Activated CD4-positive, alpha-beta T cell treated with anti-CD3 and anti-CD28 coated beads for 36 hours (primary cell): ENCODE measurements at regions of chr1 and their contacts with region 1.

Region 1: GRCh38 chr1:229558571-229559335 is at the start of gene ABCB10:
- DNase-seq: peak; percentile 94
- ATAC-seq: peak; percentile 83
- H3K4me3 Mint-ChIP-seq: peak within 1 kb of the TSS; percentile 86
- H3K27ac Mint-ChIP-seq: peak within 1 kb of the TSS; percentile 89
- H3K4me1 Mint-ChIP-seq: peaks cover 34% of the 10 kb centered on the region
- H3K27me3 Mint-ChIP-seq: no peaks in the 10 kb centered on the region
- total RNA-seq, gene ABCB10: 18.4 to 30.1 TPM

Region 2: GRCh38 chr1:228944935-228945371 is 613.8 kb before region 1 on chr1:
- CTCF ChIA-PET with region 1: no interaction called
- POLR2A ChIA-PET with region 1: no interaction called
- intact Hi-C with region 1: no loop called
- DNase-seq: peak; percentile 12
- ATAC-seq: peak; percentile 58
- H3K4me3 Mint-ChIP-seq: no peak overlapping the region
- H3K27ac Mint-ChIP-seq: no peak overlapping the region
- H3K4me1 Mint-ChIP-seq: peaks cover 2% of the 10 kb centered on the region
- H3K27me3 Mint-ChIP-seq: no peaks in the 10 kb centered on the region

Region 3: GRCh38 chr1:229270547-229271447 is 288.0 kb before region 1 on chr1 and contains the start of gene RAB4A:
- CTCF ChIA-PET with region 1: interaction called, 3 read pairs
- POLR2A ChIA-PET with region 1: no interaction called
- intact Hi-C with region 1: loop called in 1 of 2 experiments (anchors 2 kb)
- DNase-seq: peak; percentile 84
- ATAC-seq: peak; percentile 87
- H3K4me3 Mint-ChIP-seq: peak within 1 kb of the TSS; percentile 82
- H3K27ac Mint-ChIP-seq: peak within 1 kb of the TSS; percentile 71
- H3K4me1 Mint-ChIP-seq: peaks cover 31% of the 10 kb centered on the region
- H3K27me3 Mint-ChIP-seq: no peaks in the 10 kb centered on the region
- total RNA-seq, gene RAB4A: 22.1 to 24.0 TPM

Region 4: GRCh38 chr1:229507951-229508822 is 50.6 kb before region 1 on chr1 and contains the start of gene NUP133:
- CTCF ChIA-PET with region 1: interaction called, 3 read pairs
- POLR2A ChIA-PET with region 1: interaction called, 7 read pairs
- intact Hi-C with region 1: loop called (anchors 1 to 2 kb)
- DNase-seq: peak; percentile 100
- ATAC-seq: peak; percentile 95
- H3K4me3 Mint-ChIP-seq: peak within 1 kb of the TSS; percentile 95
- H3K27ac Mint-ChIP-seq: peak within 1 kb of the TSS; percentile 92
- H3K4me1 Mint-ChIP-seq: peaks cover 24% of the 10 kb centered on the region
- H3K27me3 Mint-ChIP-seq: no peaks in the 10 kb centered on the region
- total RNA-seq, gene NUP133: 53.5 to 57.5 TPM

Region 5: DNA sequence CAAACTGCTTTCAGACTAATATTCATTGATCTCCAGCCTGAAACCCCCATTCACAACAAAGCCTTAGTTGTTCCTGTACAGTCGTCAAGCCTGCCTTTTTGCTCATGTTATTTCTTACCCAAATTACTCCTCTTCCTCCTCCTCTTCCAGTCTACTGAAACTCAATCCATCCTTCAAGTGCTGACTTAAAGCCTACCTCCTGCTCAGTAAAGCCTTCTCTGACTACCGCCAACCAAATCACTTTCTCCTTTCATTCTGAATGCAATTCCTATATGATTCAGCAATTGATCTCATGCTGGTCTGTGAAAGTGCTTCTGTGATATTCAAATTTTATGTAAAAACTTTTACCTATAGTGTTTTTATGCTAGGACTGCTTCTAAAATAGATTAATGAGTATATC is 48.6 kb after region 1 on chr1:
- CTCF ChIA-PET with region 1: no interaction called
- POLR2A ChIA-PET with region 1: no interaction called
- intact Hi-C with region 1: loop called in 1 of 2 experiments (anchors 5 kb)
- DNase-seq: no peak
- ATAC-seq: peak; percentile 83
- H3K4me3 Mint-ChIP-seq: no peak overlapping the region
- H3K27ac Mint-ChIP-seq: no peak overlapping the region
- H3K4me1 Mint-ChIP-seq: peaks cover 9% of the 10 kb centered on the region
- H3K27me3 Mint-ChIP-seq: no peaks in the 10 kb centered on the region

Region 6: DNA sequence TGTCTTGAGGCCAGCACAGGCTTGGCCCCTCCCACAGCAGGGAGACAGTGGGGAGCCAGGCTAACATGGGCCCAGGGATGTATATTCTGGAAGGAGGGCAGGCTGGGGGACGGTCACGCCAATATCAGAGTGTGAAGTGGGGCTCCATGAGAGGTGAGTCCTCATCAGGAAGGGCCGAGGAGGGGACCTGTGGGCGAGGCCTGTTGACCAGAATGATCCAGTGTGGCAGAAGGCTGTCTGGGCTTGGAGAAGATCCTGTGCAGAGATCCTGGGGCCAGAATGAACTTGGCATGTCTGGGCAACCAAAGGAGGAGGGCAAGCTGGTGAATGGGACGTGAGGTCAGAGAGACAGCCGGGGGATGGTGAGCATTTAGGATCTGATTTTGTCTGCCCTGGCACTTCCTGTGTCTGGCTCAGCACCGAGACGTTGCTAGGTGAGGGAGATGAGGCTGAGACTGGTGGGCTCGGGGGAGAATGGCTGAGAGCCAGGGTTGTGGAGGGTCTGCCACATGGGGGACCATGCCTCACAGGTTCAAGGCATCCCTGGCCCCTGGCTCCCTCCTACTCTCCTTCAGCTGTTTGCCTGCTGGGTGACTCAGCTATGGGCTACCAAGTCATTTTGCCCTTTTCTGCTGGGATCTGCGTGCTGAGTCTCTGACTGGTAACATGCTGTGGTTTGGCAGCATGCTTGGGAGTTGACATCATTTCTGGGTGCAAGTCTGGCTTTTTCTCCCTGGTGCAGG is 525.6 kb after region 1 on chr1:
- CTCF ChIA-PET with region 1: no interaction called
- POLR2A ChIA-PET with region 1: no interaction called
- intact Hi-C with region 1: loop called in 1 of 2 experiments (anchors 1 kb)
- DNase-seq: peak; percentile 89
- ATAC-seq: peak; percentile 97
- H3K4me3 Mint-ChIP-seq: peak overlapping the region; percentile 11
- H3K27ac Mint-ChIP-seq: peak overlapping the region; percentile 87
- H3K4me1 Mint-ChIP-seq: peaks cover 74% of the 10 kb centered on the region
- H3K27me3 Mint-ChIP-seq: no peaks in the 10 kb centered on the region

Region 7: DNA sequence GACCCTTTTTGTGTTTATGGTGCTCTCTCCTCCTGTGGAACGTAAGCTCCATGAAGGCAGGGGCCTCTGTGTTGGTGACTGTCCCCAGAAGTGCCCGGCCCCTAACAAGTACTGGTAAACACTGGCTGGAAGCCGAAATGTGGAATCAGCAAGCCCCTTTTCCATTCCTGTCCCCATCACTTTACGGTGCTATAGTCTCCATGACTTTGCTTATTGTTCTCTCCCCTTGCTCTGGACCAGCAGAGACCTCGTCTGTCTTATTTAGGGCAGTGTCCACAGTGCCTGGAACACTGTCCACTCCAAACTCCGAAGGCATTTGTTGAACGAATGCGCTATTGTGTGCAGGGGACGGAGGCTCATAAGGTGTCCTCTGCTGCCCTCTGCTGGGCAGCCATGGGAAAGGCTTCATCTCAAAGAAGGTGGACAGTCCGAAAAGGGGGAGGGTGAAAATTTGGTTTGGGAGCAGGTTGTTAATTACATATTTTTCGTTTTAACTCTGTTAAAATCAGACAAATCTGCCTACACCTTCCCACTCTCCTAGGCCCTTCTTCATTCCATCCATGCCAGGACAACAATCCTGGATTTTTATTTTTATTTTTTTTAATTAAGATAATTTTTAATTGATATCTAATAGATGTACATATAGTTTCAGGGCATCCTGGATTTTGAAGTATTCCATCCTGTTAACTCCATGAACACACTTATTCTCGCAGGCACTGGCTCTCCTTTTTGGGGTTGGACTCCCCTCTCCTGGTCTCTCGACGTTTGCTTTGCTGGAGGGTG is 751.8 kb after region 1 on chr1:
- CTCF ChIA-PET with region 1: no interaction called
- POLR2A ChIA-PET with region 1: no interaction called
- intact Hi-C with region 1: loop called in 1 of 2 experiments (anchors 5 kb)
- DNase-seq: peak; percentile 82
- ATAC-seq: peak; percentile 48
- H3K4me3 Mint-ChIP-seq: no peak overlapping the region
- H3K27ac Mint-ChIP-seq: no peak overlapping the region
- H3K4me1 Mint-ChIP-seq: peaks cover 15% of the 10 kb centered on the region
- H3K27me3 Mint-ChIP-seq: peaks cover 4% of the 10 kb centered on the region

Region 8: GRCh38 chr1:230391781-230392535 is 833.2 kb after region 1 on chr1:
- CTCF ChIA-PET with region 1: no interaction called
- POLR2A ChIA-PET with region 1: no interaction called
- intact Hi-C with region 1: no loop called
- DNase-seq: no peak
- ATAC-seq: no peak
- H3K4me3 Mint-ChIP-seq: no peak overlapping the region
- H3K27ac Mint-ChIP-seq: no peak overlapping the region
- H3K4me1 Mint-ChIP-seq: no peaks in the 10 kb centered on the region
- H3K27me3 Mint-ChIP-seq: peaks cover 7% of the 10 kb centered on the region